Adrenal gland (tissue), 19 donors: ENCODE measurements at regions of chr12 and their contacts with region 1.

Region 1: DNA sequence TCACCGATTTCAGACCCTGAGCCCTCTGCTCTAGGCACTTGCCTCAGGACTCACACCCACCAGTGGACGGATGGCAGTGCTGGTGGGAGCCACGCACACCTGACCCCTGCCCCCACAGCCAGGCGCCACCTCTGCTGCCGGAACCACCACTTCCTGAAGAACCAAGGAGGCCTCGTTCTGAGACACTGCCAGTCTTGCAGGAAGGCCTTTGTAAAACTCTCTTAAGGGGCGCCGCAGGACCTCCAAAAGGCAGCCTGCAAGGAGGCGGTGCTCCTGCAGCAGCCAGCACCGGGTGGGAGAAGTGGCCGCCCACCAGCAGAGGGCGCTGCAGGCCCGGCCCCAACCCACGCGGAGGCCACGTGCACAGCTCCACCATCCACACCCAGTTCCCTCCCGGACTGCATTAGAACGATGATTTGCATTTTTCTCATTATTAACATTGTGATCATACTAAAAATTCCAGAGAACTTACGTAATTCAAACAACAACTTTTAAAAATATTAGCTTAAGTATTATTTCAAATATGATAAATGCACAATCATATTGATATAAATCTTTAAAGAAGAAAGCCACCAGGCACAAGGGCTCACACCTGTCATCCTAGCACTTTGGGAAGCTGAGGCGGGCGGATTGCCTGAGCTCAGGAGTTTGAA is 12.8 kb downstream of the STX2 start:
- DNase-seq: peak in 6 of 7 donors; percentile 41 to 65 (median 60)
- H3K4me3 ChIP-seq: no peak overlapping the region
- H3K27ac ChIP-seq: peak overlapping the region in 3 of 5 donors; percentile 7 to 33 (median 18)
- H3K4me1 ChIP-seq: no peaks in the 10 kb centered on the region
- H3K27me3 ChIP-seq: no peaks in the 10 kb centered on the region
- CTCF ChIP-seq: peak; percentile 48 to 79 (median 62)
- POLR2A ChIP-seq: no peak

Region 2: GRCh38 chr12:130871286-130872178 is 45.3 kb after region 1 on chr12 and contains the start of gene RAN:
- intact Hi-C with region 1: loop called in 1 of 2 experiments (anchors 5 kb)
- DNase-seq: peak; percentile 91 to 94 (median 92)
- H3K4me3 ChIP-seq: peak within 1 kb of the TSS in 3 of 4 donors; percentile 72 to 97 (median 90)
- H3K27ac ChIP-seq: peak within 1 kb of the TSS in 4 of 5 donors; percentile 80 to 95 (median 90)
- H3K4me1 ChIP-seq: peaks cover 12 to 19% of the 10 kb centered on the region in 2 donors
- H3K27me3 ChIP-seq: no peaks in the 10 kb centered on the region
- CTCF ChIP-seq: peak in 1 of 6 experiments; percentile 4
- POLR2A ChIP-seq: peak in 1 of 2 donors; percentile 59
- total RNA-seq, gene RAN: 82.4 to 897 (median 369) TPM